Caco-2 (cell line): ENCODE measurements at regions of chr5 and their contacts with region 1.

Region 1: GRCh38 chr5:94361161-94361560 is 257.2 kb downstream of the KIAA0825 start:
- DNase-seq: no peak
- H3K4me3 ChIP-seq: no peak overlapping the region
- H3K4me3 Mint-ChIP-seq: no peak overlapping the region
- H3K27ac Mint-ChIP-seq: no peak overlapping the region
- H3K4me1 ChIP-seq: peaks cover 18% of the 10 kb centered on the region; the same call in 1 of the 2 replicates
- H3K4me1 Mint-ChIP-seq: peaks cover 8% of the 10 kb centered on the region
- H3K27me3 ChIP-seq: no peaks in the 10 kb centered on the region
- H3K27me3 Mint-ChIP-seq: no peaks in the 10 kb centered on the region
- CTCF ChIP-seq: no peak

Region 2: GRCh38 chr5:94376672-94377345 is 15.6 kb after region 1 on chr5:
- CTCF ChIA-PET with region 1: interaction called, 3 read pairs
- POLR2A ChIA-PET with region 1: no interaction called
- intact Hi-C with region 1: loop called (anchors 2 kb)
- DNase-seq: no peak
- H3K4me3 ChIP-seq: no peak overlapping the region
- H3K4me3 Mint-ChIP-seq: no peak overlapping the region
- H3K27ac Mint-ChIP-seq: no peak overlapping the region
- H3K4me1 ChIP-seq: no peaks in the 10 kb centered on the region
- H3K4me1 Mint-ChIP-seq: peaks cover 10% of the 10 kb centered on the region
- H3K27me3 ChIP-seq: no peaks in the 10 kb centered on the region
- H3K27me3 Mint-ChIP-seq: no peaks in the 10 kb centered on the region
- CTCF ChIP-seq: no peak

Region 3: DNA sequence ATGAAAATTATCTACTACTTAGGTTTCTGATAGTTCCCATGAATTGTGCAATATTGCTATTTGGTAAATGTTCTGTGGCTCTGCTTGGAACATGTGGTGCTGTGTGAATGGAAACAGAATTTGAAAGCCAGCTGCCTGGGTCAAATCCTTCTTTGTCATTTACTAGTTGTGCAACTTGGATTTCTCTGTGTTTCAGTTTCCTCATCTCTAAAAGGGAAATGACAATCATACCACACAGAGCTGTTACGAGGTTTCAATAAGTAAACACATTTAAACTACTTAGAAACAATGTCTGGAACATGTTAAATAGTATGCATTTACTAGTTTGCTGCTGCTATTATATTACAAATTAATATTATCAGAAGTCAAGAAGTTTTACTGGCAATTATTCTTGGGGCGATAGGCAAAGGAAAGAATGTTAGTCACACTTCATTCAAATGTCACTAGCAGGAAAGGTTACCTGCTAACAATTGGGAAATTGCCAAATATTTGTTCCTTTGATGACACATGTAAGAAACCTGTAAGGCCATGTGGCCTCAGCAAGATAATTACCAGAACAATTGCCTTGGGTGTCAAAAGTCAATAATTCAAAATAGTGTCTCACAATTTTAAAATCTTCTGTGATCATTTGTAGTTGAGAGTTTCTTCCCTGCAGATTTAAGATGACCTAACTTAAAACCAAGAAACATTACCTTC is 72.4 kb after region 1 on chr5:
- CTCF ChIA-PET with region 1: no interaction called
- POLR2A ChIA-PET with region 1: no interaction called
- intact Hi-C with region 1: loop called (anchors 2 kb)
- DNase-seq: peak in 1 of 2 experiments; percentile 34
- H3K4me3 ChIP-seq: no peak overlapping the region
- H3K4me3 Mint-ChIP-seq: no peak overlapping the region
- H3K27ac Mint-ChIP-seq: no peak overlapping the region
- H3K4me1 ChIP-seq: no peaks in the 10 kb centered on the region
- H3K4me1 Mint-ChIP-seq: no peaks in the 10 kb centered on the region
- H3K27me3 ChIP-seq: no peaks in the 10 kb centered on the region
- H3K27me3 Mint-ChIP-seq: no peaks in the 10 kb centered on the region
- CTCF ChIP-seq: no peak

Region 4: GRCh38 chr5:95440825-95441224 is 1079.7 kb after region 1 on chr5:
- CTCF ChIA-PET with region 1: no interaction called
- POLR2A ChIA-PET with region 1: no interaction called
- intact Hi-C with region 1: no loop called
- DNase-seq: no peak
- H3K4me3 ChIP-seq: no peak overlapping the region
- H3K4me3 Mint-ChIP-seq: no peak overlapping the region
- H3K27ac Mint-ChIP-seq: no peak overlapping the region
- H3K4me1 ChIP-seq: no peaks in the 10 kb centered on the region
- H3K4me1 Mint-ChIP-seq: no peaks in the 10 kb centered on the region
- H3K27me3 ChIP-seq: no peaks in the 10 kb centered on the region
- H3K27me3 Mint-ChIP-seq: peaks cover 7% of the 10 kb centered on the region
- CTCF ChIP-seq: no peak